Left ventricle myocardium superior (tissue), 1 donor: ENCODE measurements at regions of chr13 and their contacts with region 1.

Region 1: GRCh38 chr13:44435142-44435982 is 61.7 kb downstream of the SERP2 start:
- DNase-seq: peak; percentile 93
- ATAC-seq: peak; percentile 77

Region 2: GRCh38 chr13:44050450-44051063 is 384.8 kb before region 1 on chr13:
- intact Hi-C with region 1: loop called (anchors 5 kb)
- DNase-seq: no peak
- ATAC-seq: no peak

Region 3: DNA sequence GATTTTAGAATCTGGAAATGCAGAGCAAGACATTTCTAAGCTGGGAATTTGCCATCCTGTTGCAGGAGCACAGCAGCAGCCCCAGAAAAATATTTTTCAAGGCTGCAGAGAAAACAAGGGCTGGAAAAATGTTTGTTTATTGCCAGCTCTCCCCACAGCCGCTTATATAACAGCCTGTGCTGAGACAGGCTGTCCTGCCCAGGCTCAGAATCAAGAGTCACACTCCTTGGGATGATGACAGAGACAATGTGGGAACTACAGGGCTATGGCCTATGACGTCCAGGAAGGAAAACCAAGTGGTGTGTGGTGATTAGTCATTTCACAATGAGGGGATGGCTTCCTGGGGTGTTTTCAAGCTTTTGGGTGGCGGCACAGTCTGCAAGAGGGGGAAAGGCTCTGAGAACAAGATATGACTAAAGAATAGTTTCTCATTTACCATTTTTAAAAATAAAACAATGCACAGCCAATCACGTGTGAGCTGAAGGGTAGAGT is 198.0 kb before region 1 on chr13:
- intact Hi-C with region 1: loop called (anchors 5 kb)
- DNase-seq: peak; percentile 48
- ATAC-seq: peak; percentile 99

Region 4: GRCh38 chr13:44629465-44630183 is 194.3 kb after region 1 on chr13:
- intact Hi-C with region 1: no loop called
- DNase-seq: no peak
- ATAC-seq: no peak